ENCODE measurements at regions of chr2 and their contacts with region 1.

Region 1: DNA sequence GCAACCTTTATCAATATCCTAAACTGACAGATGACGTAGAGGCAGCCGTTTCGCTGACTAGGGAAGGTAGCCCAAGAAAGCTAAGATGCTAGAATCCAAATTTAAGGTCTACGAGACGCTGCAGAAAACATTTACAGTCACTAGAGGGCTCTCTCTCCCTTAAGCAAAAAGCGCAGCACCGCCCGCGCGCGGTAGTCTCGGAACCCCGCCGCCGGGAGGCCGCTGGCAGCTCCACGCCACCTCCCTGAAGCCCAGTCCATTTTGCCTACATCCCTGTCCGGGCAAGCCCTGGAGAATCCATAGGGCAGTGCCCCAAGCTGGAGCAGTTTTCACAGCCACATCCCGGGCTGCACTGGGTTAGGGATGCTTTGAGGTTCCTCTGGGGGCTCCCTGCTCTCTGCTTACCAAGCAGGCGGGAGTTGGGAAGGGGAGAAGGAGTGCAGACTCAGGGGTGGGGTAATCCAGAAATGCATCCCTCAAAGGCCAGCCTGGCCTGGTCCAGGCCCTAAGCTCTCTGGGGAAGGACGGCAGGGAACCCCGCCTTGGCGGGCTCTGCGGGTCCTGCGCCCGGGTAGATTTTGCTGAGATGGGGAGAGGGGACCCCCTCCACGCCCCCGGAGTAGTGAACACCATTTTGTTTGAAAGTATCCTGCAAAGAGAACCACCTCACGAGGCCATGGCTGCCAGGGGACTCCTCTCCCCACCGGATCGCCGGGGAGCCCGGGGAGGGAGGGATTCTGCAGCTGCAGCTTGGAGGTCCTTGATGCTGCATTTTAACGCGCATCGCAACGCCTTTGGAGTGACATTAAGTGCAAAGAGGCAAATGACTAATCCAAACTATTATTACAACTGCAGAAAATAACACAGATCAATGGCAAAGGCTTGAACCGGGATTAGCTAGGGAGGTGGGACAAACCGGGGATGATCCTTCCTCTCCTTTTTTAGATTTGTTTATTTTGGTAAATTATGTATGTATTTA is 1.3 kb upstream of the DPYSL5 start:
- DNase-seq: peak; percentile 91
- H3K4me3 ChIP-seq: peak overlapping the region in 1 of 4 donors; percentile 2
- H3K27ac ChIP-seq: no peak overlapping the region
- H3K4me1 ChIP-seq: peaks cover 35 to 42% (median 41%) of the 10 kb centered on the region in 4 donors
- H3K27me3 ChIP-seq: peaks cover 18 to 98% (median 54%) of the 10 kb centered on the region in 4 donors
- CTCF ChIP-seq: peak; percentile 70 to 80 (median 73)
- EP300 ChIP-seq: no peak
- POLR2A ChIP-seq: no peak

Region 2: GRCh38 chr2:26630669-26631360 is 215.8 kb before region 1 on chr2:
- intact Hi-C with region 1: no loop called
- DNase-seq: no peak
- H3K4me3 ChIP-seq: no peak overlapping the region
- H3K27ac ChIP-seq: no peak overlapping the region
- H3K4me1 ChIP-seq: peaks cover 0 to 31% (median 28%) of the 10 kb centered on the region in 4 donors
- H3K27me3 ChIP-seq: no peaks in the 10 kb centered on the region
- CTCF ChIP-seq: no peak
- EP300 ChIP-seq: no peak
- POLR2A ChIP-seq: no peak

Region 3: DNA sequence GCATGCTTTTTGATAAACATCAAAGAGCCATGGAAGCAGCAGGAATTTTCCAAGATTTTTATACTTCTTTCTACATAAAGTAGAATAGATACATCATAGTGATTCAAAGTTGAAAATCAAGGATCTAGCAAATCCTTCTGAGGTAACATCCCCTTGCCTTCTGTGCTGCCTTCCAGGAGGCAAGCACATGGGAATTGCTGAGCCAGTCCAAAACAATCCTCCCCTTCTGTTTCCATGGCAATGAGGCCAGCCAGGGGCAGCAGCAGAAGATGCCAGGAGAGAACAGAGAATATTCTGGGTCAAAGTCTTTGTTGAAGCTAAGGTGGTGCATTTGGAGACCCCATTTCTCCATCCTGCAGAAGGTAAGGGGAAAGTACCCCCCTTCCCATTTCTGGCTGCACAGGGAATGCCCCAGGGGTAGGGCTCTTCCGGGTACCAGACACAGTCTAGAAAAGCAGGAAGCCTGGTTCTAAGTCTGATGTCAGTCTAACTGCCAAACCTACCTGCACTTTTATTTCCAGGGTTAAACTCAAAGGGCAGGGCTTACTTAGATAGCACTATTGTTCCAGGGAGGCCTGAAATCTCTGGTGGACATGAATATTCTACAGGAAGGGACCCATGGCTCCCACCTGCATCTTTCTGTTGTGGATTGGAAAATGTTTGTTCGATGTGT is 38.7 kb before region 1 on chr2:
- intact Hi-C with region 1: no loop called
- DNase-seq: no peak
- H3K4me3 ChIP-seq: no peak overlapping the region
- H3K27ac ChIP-seq: no peak overlapping the region
- H3K4me1 ChIP-seq: no peaks in the 10 kb centered on the region
- H3K27me3 ChIP-seq: peaks cover 0 to 12% (median 0%) of the 10 kb centered on the region in 4 donors
- CTCF ChIP-seq: no peak
- EP300 ChIP-seq: no peak
- POLR2A ChIP-seq: no peak

Region 4: GRCh38 chr2:26942543-26943295 is 96.1 kb after region 1 on chr2:
- intact Hi-C with region 1: loop called (anchors 1 kb)
- DNase-seq: no peak
- H3K4me3 ChIP-seq: no peak overlapping the region
- H3K27ac ChIP-seq: no peak overlapping the region
- H3K4me1 ChIP-seq: peaks cover 0 to 7% (median 3%) of the 10 kb centered on the region in 4 donors
- H3K27me3 ChIP-seq: peaks cover 0 to 54% (median 0%) of the 10 kb centered on the region in 4 donors
- CTCF ChIP-seq: peak; percentile 50 to 79 (median 63)
- EP300 ChIP-seq: no peak
- POLR2A ChIP-seq: no peak

Region 5: DNA sequence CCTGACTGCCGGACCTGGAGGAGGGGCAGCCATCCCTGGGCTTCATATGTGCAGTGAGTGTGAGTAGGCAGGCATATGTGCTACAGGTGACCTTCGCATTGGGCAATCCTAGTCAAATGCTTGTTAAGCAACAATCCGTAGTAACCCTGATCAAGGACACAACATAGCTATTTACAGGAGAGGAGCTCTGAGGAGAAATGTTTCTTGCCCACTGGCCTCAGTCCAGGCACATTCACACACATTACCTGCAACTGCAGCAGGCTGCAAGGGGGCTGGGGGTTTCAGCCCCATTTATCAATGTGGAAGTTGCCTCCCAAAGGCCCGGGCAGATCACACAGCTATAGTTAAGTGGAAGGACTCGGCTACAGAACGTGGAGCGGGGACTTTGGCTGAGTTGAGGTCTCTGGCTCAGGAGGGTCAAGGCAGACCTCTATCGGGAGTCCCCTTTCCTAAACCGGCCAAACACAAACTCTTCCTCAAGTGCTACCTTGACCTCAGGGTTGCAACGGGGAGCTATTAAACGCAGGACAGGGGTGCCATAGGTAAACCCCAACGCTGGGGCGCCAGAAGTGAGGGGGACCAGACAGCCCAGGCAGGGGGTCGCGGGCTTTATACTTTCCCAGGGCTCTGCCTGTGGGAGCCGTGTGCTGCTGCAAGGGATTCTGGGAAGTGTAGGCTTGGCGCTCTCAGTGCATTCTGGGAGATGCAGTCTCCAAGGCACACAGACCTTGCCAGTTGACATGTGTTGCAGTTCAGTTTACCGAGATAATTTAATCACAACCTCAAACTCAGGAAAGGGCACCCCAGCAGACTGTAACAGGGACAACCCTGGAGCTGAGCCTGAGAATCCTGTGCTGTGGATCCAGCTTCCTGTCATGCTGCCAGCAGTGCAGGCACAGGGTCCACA is 249.4 kb after region 1 on chr2:
- intact Hi-C with region 1: no loop called
- DNase-seq: no peak
- H3K4me3 ChIP-seq: peak overlapping the region; percentile 42 to 57 (median 46)
- H3K27ac ChIP-seq: no peak overlapping the region
- H3K4me1 ChIP-seq: peaks cover 11 to 13% (median 12%) of the 10 kb centered on the region in 4 donors
- H3K27me3 ChIP-seq: no peaks in the 10 kb centered on the region
- CTCF ChIP-seq: no peak
- EP300 ChIP-seq: no peak
- POLR2A ChIP-seq: no peak